CD8-positive, alpha-beta T cell (primary cell): ENCODE measurements at regions of chrX and their contacts with region 1.

Region 1: DNA sequence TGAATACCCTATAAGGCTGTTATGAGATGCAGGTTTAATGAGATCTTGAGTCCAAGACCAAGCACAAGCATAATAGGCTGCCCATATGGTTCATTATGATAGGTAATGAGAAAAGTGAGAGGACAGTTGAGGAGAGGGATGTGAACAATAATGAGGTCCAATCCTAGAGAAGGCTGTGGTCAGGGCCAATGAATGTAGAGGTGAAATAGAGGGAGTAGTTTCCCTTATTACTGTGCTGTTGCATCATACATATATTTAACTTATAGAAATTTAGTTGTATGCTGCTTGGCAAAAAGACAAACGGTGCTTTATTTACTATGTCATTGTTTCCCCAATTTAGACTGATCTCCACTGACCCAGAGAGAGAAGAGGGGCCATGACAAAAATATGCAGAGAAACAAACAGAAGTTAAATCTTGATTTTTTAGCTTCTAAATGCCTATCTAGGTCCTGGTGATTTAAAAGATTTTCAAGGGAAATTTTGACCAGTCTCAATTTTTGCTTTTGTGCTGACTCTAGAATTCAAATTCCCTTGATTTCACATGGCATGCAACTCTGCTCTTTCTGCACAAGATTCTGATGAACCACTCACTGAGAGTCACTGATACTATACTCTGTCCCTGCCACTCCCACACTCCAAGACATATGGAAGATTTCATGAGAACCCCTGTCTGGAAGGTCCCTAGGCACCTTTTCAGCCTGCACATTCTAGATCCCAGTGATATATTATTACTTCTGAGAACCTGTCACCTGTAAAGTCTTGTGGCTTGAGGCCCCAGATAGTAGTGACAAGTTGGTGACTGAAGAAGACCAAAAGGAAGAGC is 159.7 kb downstream of the VSIG4 start:
- DNase-seq: no peak
- ATAC-seq: no peak
- H3K4me3 ChIP-seq: no peak overlapping the region
- H3K4me3 Mint-ChIP-seq: no peak overlapping the region
- H3K27ac ChIP-seq: no peak overlapping the region
- H3K27ac Mint-ChIP-seq: no peak overlapping the region
- H3K4me1 ChIP-seq: peaks cover 15% of the 10 kb centered on the region
- H3K4me1 Mint-ChIP-seq: peaks cover 25% of the 10 kb centered on the region
- H3K27me3 ChIP-seq: no peaks in the 10 kb centered on the region
- H3K27me3 Mint-ChIP-seq: no peaks in the 10 kb centered on the region
- CTCF ChIP-seq: no peak

Region 2: DNA sequence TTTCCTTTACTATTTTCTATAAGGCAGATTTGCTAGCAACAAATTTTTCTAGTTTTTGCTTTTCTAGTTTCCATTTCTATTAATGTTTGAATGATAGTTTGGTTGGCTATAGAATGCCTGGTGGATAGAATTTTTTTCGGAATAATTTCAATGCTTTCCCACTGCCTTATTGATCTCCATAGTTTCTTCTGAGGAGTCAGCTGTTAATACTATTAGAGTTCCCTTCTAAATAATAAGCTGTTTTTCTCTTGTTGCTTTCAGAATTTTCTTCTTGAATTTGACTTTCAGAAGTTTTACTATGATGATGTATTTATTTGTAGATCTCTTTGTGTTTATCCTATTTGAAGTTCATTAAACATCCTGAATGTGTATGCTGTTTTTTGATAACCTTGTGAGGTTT is 67.9 kb after region 1 on chrX:
- CTCF ChIA-PET with region 1: no interaction called
- POLR2A ChIA-PET with region 1: no interaction called
- intact Hi-C with region 1: loop called in 1 of 2 experiments (anchors 10 kb)
- DNase-seq: no peak
- ATAC-seq: no peak
- H3K4me3 ChIP-seq: no peak overlapping the region
- H3K4me3 Mint-ChIP-seq: no peak overlapping the region
- H3K27ac ChIP-seq: no peak overlapping the region
- H3K27ac Mint-ChIP-seq: no peak overlapping the region
- H3K4me1 ChIP-seq: peaks cover 7% of the 10 kb centered on the region
- H3K4me1 Mint-ChIP-seq: peaks cover 22% of the 10 kb centered on the region
- H3K27me3 ChIP-seq: no peaks in the 10 kb centered on the region
- H3K27me3 Mint-ChIP-seq: no peaks in the 10 kb centered on the region
- CTCF ChIP-seq: no peak

Region 3: DNA sequence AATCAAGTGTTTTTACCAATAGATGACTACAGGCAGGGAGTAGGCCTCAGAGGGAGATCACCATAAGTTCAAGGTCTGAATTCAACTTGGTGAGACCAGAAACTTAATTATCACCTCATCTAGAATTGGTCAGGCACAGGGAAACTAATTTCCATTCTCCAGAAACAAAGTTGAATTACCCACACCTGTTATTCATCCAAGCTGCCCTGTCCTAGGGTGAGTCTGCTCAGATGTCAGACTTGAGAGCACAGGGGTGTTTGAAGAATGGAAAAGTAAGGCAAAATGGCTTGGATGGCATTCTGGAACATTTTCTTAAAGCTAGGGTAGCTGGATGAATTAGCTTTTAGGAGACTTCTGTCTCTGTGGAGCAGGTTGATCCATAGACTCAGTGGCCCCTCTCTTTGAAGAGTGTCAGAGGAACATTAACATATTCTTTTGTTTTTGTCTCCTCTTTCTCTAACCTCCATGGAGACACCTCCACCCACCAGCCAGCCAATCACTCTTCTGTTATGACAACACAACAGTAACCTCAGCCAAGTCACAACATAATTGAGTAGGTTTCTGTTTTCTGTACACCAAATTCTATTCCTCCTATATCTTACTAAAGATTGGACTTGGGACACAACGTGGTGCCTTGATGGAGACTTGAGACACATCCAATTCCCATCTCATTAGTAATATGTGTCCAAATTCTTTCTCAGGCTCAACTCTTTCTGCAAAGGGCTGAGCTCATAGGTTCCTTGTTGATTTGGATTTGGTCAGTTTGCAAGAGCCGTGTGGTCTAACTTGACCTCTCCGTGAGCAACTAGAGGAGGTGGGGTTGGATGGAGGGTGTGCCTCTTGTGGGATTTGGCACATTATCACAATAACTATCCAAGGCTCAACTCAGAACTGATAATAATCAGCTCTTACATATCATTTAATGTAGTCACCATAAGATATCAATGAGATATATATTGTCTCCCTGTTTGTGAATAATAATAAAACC is 114.6 kb after region 1 on chrX:
- CTCF ChIA-PET with region 1: no interaction called
- POLR2A ChIA-PET with region 1: no interaction called
- intact Hi-C with region 1: no loop called
- DNase-seq: no peak
- ATAC-seq: no peak
- H3K4me3 ChIP-seq: no peak overlapping the region
- H3K4me3 Mint-ChIP-seq: no peak overlapping the region
- H3K27ac ChIP-seq: no peak overlapping the region
- H3K27ac Mint-ChIP-seq: no peak overlapping the region
- H3K4me1 ChIP-seq: peaks cover 5% of the 10 kb centered on the region
- H3K4me1 Mint-ChIP-seq: peaks cover 22% of the 10 kb centered on the region
- H3K27me3 ChIP-seq: no peaks in the 10 kb centered on the region
- H3K27me3 Mint-ChIP-seq: no peaks in the 10 kb centered on the region
- CTCF ChIP-seq: no peak

Region 4: DNA sequence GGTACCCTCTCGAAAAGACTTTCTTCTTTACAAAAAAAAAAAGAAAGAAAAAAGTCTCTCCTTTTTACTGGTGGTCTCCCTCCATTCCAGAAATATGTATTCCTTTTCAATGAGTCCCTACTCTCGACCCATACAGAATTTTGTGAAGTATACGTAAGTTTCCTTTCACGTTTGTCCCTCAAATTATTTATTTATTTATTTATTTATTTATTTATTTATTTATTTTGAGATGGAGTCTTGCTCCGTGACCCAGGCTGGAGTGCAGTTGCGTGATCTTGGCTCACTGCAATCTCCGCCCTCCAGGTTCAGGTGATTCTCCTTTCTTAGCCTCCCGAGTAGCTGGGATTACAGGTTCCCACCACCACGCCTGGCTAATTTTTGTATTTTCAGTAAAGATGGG is 1234.4 kb after region 1 on chrX:
- CTCF ChIA-PET with region 1: no interaction called
- POLR2A ChIA-PET with region 1: no interaction called
- intact Hi-C with region 1: no loop called
- DNase-seq: no peak
- ATAC-seq: no peak
- H3K4me3 ChIP-seq: no peak overlapping the region
- H3K4me3 Mint-ChIP-seq: no peak overlapping the region
- H3K27ac ChIP-seq: no peak overlapping the region
- H3K27ac Mint-ChIP-seq: no peak overlapping the region
- H3K4me1 ChIP-seq: no peaks in the 10 kb centered on the region
- H3K4me1 Mint-ChIP-seq: no peaks in the 10 kb centered on the region
- H3K27me3 ChIP-seq: no peaks in the 10 kb centered on the region
- H3K27me3 Mint-ChIP-seq: no peaks in the 10 kb centered on the region
- CTCF ChIP-seq: no peak